Endothelial cell of umbilical vein (primary cell): ENCODE measurements at regions of chr6 and their contacts with region 1.

Region 1: GRCh38 chr6:104525677-104526312 is 333.9 kb downstream of the HACE1 start:
- DNase-seq: peak; percentile 82
- H3K4me3 ChIP-seq: peak overlapping the region in 2 of 3 experiments; percentile 24 to 62
- H3K27ac ChIP-seq: peak overlapping the region; percentile 62
- H3K4me1 ChIP-seq: peaks cover 27% of the 10 kb centered on the region
- H3K27me3 ChIP-seq: no peaks in the 10 kb centered on the region
- CTCF ChIP-seq: peak; percentile 79 to 82
- POLR2A ChIP-seq: no peak

Region 2: DNA sequence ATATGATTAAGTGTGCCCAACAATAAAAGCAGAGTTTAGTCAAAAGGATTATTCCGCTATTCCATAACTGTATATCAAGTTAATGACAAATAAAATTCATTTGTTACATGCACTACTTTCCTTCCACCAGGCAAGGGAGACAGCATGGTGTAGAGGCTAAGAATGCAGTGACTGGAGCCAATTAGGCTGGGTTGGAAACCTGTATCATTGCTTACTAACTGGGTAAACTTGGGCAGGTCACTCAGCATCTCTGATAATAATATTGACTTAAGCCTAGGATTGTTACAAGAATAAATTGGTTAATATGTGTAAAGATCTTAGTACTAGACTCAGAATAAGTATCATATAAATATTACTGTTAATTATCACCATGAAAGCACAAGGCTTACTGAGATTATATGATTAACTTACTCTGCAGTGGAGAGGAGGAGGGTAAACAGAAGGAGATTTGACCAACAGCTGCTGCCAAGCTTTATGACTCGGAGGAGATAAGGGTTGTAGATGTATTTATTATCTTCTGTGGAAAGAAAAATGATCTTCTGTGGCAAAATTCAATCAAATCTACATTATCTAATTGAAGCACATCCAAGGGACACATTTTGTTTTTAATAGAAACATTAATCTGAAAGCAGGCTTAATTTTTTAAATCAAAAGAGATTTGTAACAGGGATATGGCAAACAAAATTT is 1672.4 kb before region 1 on chr6:
- CTCF ChIA-PET with region 1: interaction called, 5 read pairs
- POLR2A ChIA-PET with region 1: no interaction called
- dilution Hi-C with region 1: no loop called
- intact Hi-C with region 1: loop called (anchors 1 kb)
- DNase-seq: no peak
- H3K4me3 ChIP-seq: no peak overlapping the region
- H3K27ac ChIP-seq: no peak overlapping the region
- H3K4me1 ChIP-seq: no peaks in the 10 kb centered on the region
- H3K27me3 ChIP-seq: no peaks in the 10 kb centered on the region
- CTCF ChIP-seq: no peak
- POLR2A ChIP-seq: no peak

Region 3: GRCh38 chr6:104325341-104326172 is 200.2 kb before region 1 on chr6:
- CTCF ChIA-PET with region 1: interaction called, 3 read pairs
- POLR2A ChIA-PET with region 1: no interaction called
- dilution Hi-C with region 1: no loop called
- intact Hi-C with region 1: loop called (anchors 1 kb)
- DNase-seq: peak; percentile 43
- H3K4me3 ChIP-seq: no peak overlapping the region
- H3K27ac ChIP-seq: no peak overlapping the region
- H3K4me1 ChIP-seq: no peaks in the 10 kb centered on the region
- H3K27me3 ChIP-seq: no peaks in the 10 kb centered on the region
- CTCF ChIP-seq: peak; percentile 46 to 54
- POLR2A ChIP-seq: no peak

Region 4: DNA sequence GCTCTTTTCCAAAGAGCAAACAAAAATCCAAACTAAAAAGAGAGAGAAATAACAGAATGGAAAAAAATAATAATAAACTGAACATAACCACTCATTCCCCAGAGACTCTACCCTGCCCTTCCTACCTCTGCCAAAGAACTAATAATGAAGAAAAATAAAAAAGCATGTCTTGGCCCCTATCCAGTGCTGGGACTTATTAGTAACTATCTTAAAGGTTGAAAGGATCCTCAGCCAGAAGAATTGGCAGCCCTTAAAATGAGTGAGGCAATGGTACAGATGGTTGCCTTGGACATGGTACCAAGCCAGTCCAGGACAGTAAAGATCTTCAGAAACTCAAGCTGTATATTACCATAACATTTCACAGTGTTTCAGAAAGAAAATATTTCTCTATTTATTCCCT is 54.7 kb after region 1 on chr6:
- CTCF ChIA-PET with region 1: no interaction called
- POLR2A ChIA-PET with region 1: no interaction called
- dilution Hi-C with region 1: no loop called
- intact Hi-C with region 1: no loop called
- DNase-seq: no peak
- H3K4me3 ChIP-seq: no peak overlapping the region
- H3K27ac ChIP-seq: no peak overlapping the region
- H3K4me1 ChIP-seq: no peaks in the 10 kb centered on the region
- H3K27me3 ChIP-seq: no peaks in the 10 kb centered on the region
- CTCF ChIP-seq: no peak
- POLR2A ChIP-seq: no peak

Region 5: DNA sequence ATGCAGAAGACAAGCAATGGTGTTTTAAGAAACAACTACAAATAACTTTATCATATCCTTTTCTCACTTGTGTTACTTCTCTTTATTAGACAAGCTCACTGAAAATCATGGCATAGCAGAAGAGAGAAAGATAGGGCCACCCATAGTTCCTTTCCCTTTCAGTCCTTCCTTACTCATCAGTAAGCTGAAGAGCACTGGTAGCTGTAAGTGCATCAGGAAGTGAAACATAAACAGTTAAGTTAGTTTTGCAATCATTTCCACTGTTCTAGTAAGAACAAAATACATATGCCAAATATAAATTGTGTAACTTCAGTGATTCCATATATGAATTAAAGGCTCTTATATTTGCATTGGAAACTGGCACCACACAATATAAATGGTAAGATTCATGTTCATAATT is 113.9 kb after region 1 on chr6:
- CTCF ChIA-PET with region 1: interaction called, 11 read pairs
- POLR2A ChIA-PET with region 1: no interaction called
- dilution Hi-C with region 1: no loop called
- intact Hi-C with region 1: loop called (anchors 2 kb)
- DNase-seq: peak; percentile 26
- H3K4me3 ChIP-seq: no peak overlapping the region
- H3K27ac ChIP-seq: peak overlapping the region; percentile 77
- H3K4me1 ChIP-seq: peaks cover 50% of the 10 kb centered on the region
- H3K27me3 ChIP-seq: no peaks in the 10 kb centered on the region
- CTCF ChIP-seq: no peak
- POLR2A ChIP-seq: no peak

Region 6: GRCh38 chr6:104705095-104705707 is 179.4 kb after region 1 on chr6:
- CTCF ChIA-PET with region 1: no interaction called
- POLR2A ChIA-PET with region 1: no interaction called
- dilution Hi-C with region 1: no loop called
- intact Hi-C with region 1: loop called (anchors 1 kb)
- DNase-seq: peak; percentile 88
- H3K4me3 ChIP-seq: peak overlapping the region in 1 of 3 experiments; percentile 45
- H3K27ac ChIP-seq: peak overlapping the region; percentile 99
- H3K4me1 ChIP-seq: peaks cover 48% of the 10 kb centered on the region
- H3K27me3 ChIP-seq: no peaks in the 10 kb centered on the region
- CTCF ChIP-seq: no peak
- POLR2A ChIP-seq: peak; percentile 51